ENCODE measurements at regions of chr19 and their contacts with region 1.

Region 1: GRCh38 chr19:48458016-48458415 is 2.6 kb downstream of the KCNJ14 start:
- DNase-seq: no peak
- H3K4me3 Mint-ChIP-seq: no peak overlapping the region
- H3K27ac Mint-ChIP-seq: peak overlapping the region; percentile 3
- H3K4me1 Mint-ChIP-seq: peaks cover 2% of the 10 kb centered on the region
- H3K27me3 Mint-ChIP-seq: no peaks in the 10 kb centered on the region

Region 2: DNA sequence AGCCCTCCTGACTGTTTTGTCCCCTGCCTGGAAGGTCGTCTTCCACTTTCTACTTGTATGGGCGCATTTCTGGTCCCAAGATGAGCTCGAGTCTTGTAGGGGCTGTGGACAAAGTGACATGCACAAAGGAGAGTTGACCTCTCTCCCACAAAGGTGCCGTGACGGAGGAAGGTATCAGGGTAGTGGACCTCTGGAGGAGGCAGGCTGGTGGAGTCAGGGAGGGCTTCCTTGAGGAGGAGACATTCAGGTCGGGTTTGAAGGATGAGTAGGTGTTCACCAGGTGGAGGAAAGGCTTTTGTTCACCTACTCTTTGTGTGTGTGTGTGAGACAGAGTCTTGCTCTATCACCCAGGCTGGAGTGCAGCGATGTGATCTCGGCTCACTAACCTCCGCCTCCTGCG is 12.8 kb after region 1 on chr19:
- CTCF ChIA-PET with region 1: interaction called, 3 read pairs
- POLR2A ChIA-PET with region 1: interaction called, 13 read pairs
- DNase-seq: no peak
- H3K4me3 Mint-ChIP-seq: peak overlapping the region; percentile 83
- H3K27ac Mint-ChIP-seq: peak overlapping the region; percentile 12
- H3K4me1 Mint-ChIP-seq: peaks cover 26% of the 10 kb centered on the region
- H3K27me3 Mint-ChIP-seq: no peaks in the 10 kb centered on the region

Measured in activated CD4-positive, alpha-beta T cell treated with anti-CD3 and anti-CD28 coated beads, Interleukin-2, amount 10 ng/mL, durations not matched to agents 7 days and 5 days (primary cell).